GM12878 (cell line): ENCODE measurements at regions of chr4 and their contacts with region 1.

Region 1: GRCh38 chr4:161252520-161253141 is 911.2 kb downstream of the FSTL5 start:
- DNase-seq: peak; percentile 15
- ATAC-seq: peak; percentile 81
- H3K4me3 ChIP-seq: no peak overlapping the region
- H3K27ac ChIP-seq: no peak overlapping the region
- H3K4me1 ChIP-seq: no peaks in the 10 kb centered on the region
- H3K27me3 ChIP-seq: no peaks in the 10 kb centered on the region
- CTCF ChIP-seq: peak; percentile 89 to 92 (median 91)
- EP300 ChIP-seq: no peak
- POLR2A ChIP-seq: no peak
- RAD21 ChIP-seq: peak; percentile 80

Region 2: GRCh38 chr4:161273607-161274006 is 21.0 kb after region 1 on chr4:
- CTCF ChIA-PET with region 1: interaction called, 8 read pairs
- POLR2A ChIA-PET with region 1: no interaction called
- RAD21 ChIA-PET with region 1: no interaction called
- SMC1A ChIA-PET with region 1: interaction called, 10 read pairs
- in situ Hi-C with region 1: no loop called
- intact Hi-C with region 1: no loop called
- DNase-seq: no peak
- ATAC-seq: peak; percentile 90
- H3K4me3 ChIP-seq: no peak overlapping the region
- H3K27ac ChIP-seq: no peak overlapping the region
- H3K4me1 ChIP-seq: no peaks in the 10 kb centered on the region
- H3K27me3 ChIP-seq: no peaks in the 10 kb centered on the region
- CTCF ChIP-seq: no peak
- EP300 ChIP-seq: no peak
- POLR2A ChIP-seq: no peak
- RAD21 ChIP-seq: no peak

Region 3: GRCh38 chr4:161419822-161420221 is 167.2 kb after region 1 on chr4:
- CTCF ChIA-PET with region 1: interaction called, 14 read pairs
- POLR2A ChIA-PET with region 1: no interaction called
- RAD21 ChIA-PET with region 1: interaction called, 4 read pairs
- SMC1A ChIA-PET with region 1: interaction called, 5 read pairs
- in situ Hi-C with region 1: no loop called
- intact Hi-C with region 1: loop called (anchors 1 kb)
- DNase-seq: no peak
- ATAC-seq: peak; percentile 97
- H3K4me3 ChIP-seq: no peak overlapping the region
- H3K27ac ChIP-seq: no peak overlapping the region
- H3K4me1 ChIP-seq: no peaks in the 10 kb centered on the region
- H3K27me3 ChIP-seq: no peaks in the 10 kb centered on the region
- CTCF ChIP-seq: peak in 2 of 3 experiments; percentile 30 to 48; a peak in 4 of 6 replicates
- EP300 ChIP-seq: no peak
- POLR2A ChIP-seq: no peak
- RAD21 ChIP-seq: peak; percentile 53

Region 4: GRCh38 chr4:161642708-161643107 is 390.1 kb after region 1 on chr4:
- CTCF ChIA-PET with region 1: interaction called, 9 read pairs
- POLR2A ChIA-PET with region 1: no interaction called
- RAD21 ChIA-PET with region 1: interaction called, 3 read pairs
- SMC1A ChIA-PET with region 1: interaction called, 3 read pairs
- in situ Hi-C with region 1: no loop called
- intact Hi-C with region 1: loop called (anchors 5 kb)
- DNase-seq: no peak
- ATAC-seq: peak; percentile 54
- H3K4me3 ChIP-seq: no peak overlapping the region
- H3K27ac ChIP-seq: no peak overlapping the region
- H3K4me1 ChIP-seq: no peaks in the 10 kb centered on the region
- H3K27me3 ChIP-seq: no peaks in the 10 kb centered on the region
- CTCF ChIP-seq: no peak; a peak in 1 of 6 replicates
- EP300 ChIP-seq: no peak
- POLR2A ChIP-seq: no peak
- RAD21 ChIP-seq: 0 out of 2 replicates have a peak, but pooled peaks have one; percentile 8

Region 5: DNA sequence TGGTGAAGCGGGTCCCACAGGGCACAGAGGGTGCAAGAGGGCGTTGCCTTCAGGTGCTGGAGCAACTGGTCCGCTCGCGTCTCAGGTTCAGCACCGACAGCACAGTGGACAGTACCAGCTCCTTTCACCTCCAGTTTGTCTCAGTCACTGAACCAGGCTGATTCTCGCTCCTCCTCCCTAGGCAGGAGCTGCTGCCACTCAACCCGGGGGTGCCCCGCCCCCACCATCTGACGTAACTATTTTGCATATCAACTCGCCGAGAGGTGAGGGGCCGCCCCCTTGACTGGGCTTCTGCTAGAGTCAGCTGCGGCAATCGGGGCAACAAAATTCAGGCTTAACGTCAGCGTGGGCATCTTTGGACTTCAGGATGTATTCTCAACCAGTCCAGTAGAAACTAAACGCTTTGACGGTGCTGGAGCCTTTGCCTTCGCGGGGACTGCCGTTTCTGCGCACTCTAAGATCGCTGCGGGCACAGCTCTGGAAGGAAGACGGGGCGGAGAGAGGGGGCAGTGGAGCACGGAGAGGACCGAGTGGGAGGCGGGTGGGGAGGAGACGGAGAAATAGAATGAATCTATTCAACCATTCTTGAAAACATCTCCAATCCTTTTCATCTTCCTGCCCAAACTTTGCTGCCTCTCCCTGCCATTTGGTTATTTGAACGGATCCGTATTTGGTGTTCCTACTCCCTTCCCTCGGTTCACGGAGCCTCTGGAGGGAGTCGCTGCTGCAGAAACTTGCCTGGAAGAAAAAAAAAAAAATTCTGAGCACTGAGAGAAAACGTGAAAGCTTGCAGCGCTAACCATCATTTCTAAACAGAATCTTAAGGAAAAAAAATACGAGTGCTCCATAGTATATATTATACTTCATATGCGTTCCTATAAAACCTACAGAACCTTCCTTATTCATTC is 911.5 kb after region 1 on chr4 and contains the start of gene FSTL5:
- CTCF ChIA-PET with region 1: interaction called, 4 read pairs
- POLR2A ChIA-PET with region 1: no interaction called
- RAD21 ChIA-PET with region 1: interaction called, 4 read pairs
- SMC1A ChIA-PET with region 1: interaction called, 4 read pairs
- in situ Hi-C with region 1: no loop called
- intact Hi-C with region 1: loop called (anchors 1 kb)
- DNase-seq: no peak
- ATAC-seq: peak; percentile 80
- H3K4me3 ChIP-seq: peak within 1 kb of the TSS; percentile 16; the same call in 1 of the 2 replicates
- H3K27ac ChIP-seq: no peak within 1 kb of the TSS
- H3K4me1 ChIP-seq: no peaks in the 10 kb centered on the region; the same call in 1 of the 2 replicates
- H3K27me3 ChIP-seq: no peaks in the 10 kb centered on the region
- CTCF ChIP-seq: no peak
- EP300 ChIP-seq: no peak
- POLR2A ChIP-seq: no peak
- RAD21 ChIP-seq: no peak
- polyA plus RNA-seq, gene FSTL5: 0.04 TPM in 1 of 2 experiments, not detected in the other